Astrocyte of the cerebellum (primary cell): ENCODE measurements at regions of chr7 and their contacts with region 1.

Region 1: GRCh38 chr7:157336383-157337315 is at the start of gene DNAJB6:
- DNase-seq: peak; percentile 80
- H3K4me3 ChIP-seq: peak within 1 kb of the TSS; percentile 86
- CTCF ChIP-seq: no peak

Region 2: DNA sequence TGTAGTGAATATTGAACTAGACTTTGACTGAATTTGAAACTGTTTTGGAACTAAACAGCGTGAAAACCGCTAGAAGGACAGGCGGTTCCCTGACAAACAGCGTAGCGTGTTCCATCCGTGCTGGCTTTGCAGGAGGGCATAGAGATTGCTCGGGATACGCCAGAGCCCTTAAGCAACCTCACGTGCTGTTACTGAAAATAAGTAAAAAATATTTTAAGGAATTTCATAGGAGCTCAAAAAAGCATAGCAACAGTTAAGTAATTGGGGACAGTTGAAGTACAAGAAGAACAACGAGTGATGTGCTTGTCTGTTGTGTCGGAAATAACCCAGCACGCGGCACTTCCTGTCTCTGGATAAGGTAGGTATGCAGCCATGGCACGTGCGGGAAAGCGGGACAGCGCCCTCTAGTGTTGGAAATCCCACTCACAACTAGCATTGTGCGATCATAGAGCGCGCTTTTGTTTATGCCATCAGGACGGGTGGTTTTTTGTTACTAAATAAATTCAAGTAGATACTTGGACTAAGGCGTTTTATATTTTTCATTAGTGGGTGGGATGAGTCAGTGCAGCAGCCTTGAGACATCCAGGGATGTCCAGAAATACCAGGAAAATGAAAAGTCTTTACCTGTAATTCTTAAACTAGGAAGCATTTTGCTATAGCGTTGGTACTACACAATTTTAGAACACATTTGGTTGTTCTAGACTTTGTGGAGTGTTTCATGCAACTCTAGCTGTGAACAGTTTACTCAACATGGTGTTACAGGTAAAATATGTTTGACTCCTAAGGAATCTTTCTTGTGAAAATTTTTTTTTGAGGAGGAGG is 50.5 kb after region 1 on chr7:
- in situ Hi-C with region 1: loop called (anchors 10 kb)
- DNase-seq: peak; percentile 37
- H3K4me3 ChIP-seq: no peak overlapping the region
- CTCF ChIP-seq: peak; percentile 85